Esophagus muscularis mucosa (tissue), 4 donors: ENCODE measurements at regions of chr3 and their contacts with region 1.

Region 1: DNA sequence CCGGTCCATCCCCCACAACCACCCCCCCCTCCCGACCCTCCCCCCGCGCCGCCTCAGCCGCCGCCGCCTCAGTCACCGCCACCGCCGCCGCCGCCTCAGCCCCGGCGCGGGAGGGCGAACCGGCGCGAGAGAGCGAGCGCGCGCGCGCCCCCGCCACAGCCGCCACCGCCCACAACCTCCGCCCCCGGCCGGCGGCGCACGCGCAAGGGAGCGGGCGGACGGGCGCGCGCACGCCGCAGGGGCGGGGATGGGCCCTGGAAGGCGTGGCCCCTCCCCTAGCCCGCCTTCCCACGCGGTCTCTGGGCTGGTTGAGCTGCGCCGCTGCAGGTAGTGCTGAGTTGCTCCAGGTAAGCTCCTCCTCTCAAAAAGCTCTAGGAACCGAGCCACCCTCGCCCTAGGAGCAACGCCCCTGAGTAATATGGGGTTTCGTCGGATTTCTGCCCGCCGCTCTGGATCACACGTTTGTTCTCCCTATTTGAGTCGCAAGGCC is at the start of gene TMCC1:
- DNase-seq: peak; percentile 92
- H3K4me3 ChIP-seq: peak within 1 kb of the TSS; percentile 62 to 95 (median 88)
- H3K27ac ChIP-seq: peak within 1 kb of the TSS; percentile 91 to 94 (median 92)
- H3K4me1 ChIP-seq: peaks cover 40 to 52% (median 47%) of the 10 kb centered on the region in 4 donors
- H3K27me3 ChIP-seq: no peaks in the 10 kb centered on the region
- CTCF ChIP-seq: peak in 1 of 3 experiments; percentile 5
- EP300 ChIP-seq: no peak
- POLR2A ChIP-seq: no peak
- total RNA-seq, gene TMCC1: 24.5 to 36.2 (median 28.9) TPM

Region 2: GRCh38 chr3:129365296-129366136 is 528.1 kb before region 1 on chr3:
- intact Hi-C with region 1: no loop called
- DNase-seq: no peak
- H3K4me3 ChIP-seq: no peak overlapping the region
- H3K27ac ChIP-seq: no peak overlapping the region
- H3K4me1 ChIP-seq: peaks cover 0 to 3% (median 0%) of the 10 kb centered on the region in 4 donors
- H3K27me3 ChIP-seq: peaks cover 0 to 9% (median 0%) of the 10 kb centered on the region in 4 donors
- CTCF ChIP-seq: no peak
- EP300 ChIP-seq: no peak
- POLR2A ChIP-seq: no peak

Region 3: DNA sequence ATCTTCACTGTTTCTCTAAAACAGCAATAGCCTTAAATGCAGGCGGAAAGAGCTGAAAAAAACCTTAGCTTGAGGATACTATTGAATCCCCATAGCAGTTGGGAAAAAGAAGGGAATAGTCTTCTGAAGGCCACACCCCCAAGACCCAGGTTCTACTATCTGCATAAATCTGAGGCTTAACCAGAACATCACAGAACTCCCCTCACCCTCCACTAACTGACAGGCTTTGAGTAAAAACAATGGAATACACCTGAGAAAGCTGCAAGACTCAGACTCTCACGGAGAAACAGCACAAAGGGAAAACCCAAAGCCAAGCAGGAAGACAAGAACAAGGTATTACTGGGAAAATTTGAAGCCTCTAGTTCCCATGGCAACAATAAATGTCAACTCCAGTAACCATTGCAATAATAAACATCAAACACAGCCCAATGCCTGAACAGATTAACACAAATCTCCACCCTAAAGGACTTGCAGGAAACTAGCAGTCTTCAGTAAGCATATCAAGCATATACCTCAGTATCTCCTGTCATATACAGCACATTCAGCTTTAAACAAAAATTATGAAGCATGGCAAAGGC is 56.5 kb before region 1 on chr3:
- intact Hi-C with region 1: loop called (anchors 5 kb)
- DNase-seq: no peak
- H3K4me3 ChIP-seq: no peak overlapping the region
- H3K27ac ChIP-seq: no peak overlapping the region
- H3K4me1 ChIP-seq: peaks cover 10 to 36% (median 25%) of the 10 kb centered on the region in 4 donors
- H3K27me3 ChIP-seq: no peaks in the 10 kb centered on the region
- CTCF ChIP-seq: no peak
- EP300 ChIP-seq: no peak
- POLR2A ChIP-seq: no peak

Region 4: GRCh38 chr3:130048726-130049125 is 155.1 kb after region 1 on chr3:
- intact Hi-C with region 1: no loop called
- DNase-seq: no peak
- H3K4me3 ChIP-seq: no peak overlapping the region
- H3K27ac ChIP-seq: no peak overlapping the region
- H3K4me1 ChIP-seq: peaks cover 0 to 5% (median 1%) of the 10 kb centered on the region in 4 donors
- H3K27me3 ChIP-seq: no peaks in the 10 kb centered on the region
- CTCF ChIP-seq: no peak
- EP300 ChIP-seq: no peak
- POLR2A ChIP-seq: no peak

Region 5: GRCh38 chr3:130111185-130111864 is 217.7 kb after region 1 on chr3:
- intact Hi-C with region 1: no loop called
- DNase-seq: peak; percentile 100
- H3K4me3 ChIP-seq: peak overlapping the region; percentile 65 to 92 (median 83)
- H3K27ac ChIP-seq: peak overlapping the region; percentile 85 to 93 (median 92)
- H3K4me1 ChIP-seq: peaks cover 9 to 21% (median 19%) of the 10 kb centered on the region in 4 donors
- H3K27me3 ChIP-seq: no peaks in the 10 kb centered on the region
- CTCF ChIP-seq: no peak
- EP300 ChIP-seq: no peak
- POLR2A ChIP-seq: no peak